ENCODE measurements at regions of chr16 and their contacts with region 1.

Region 1: GRCh38 chr16:82867485-82867884 is 240.7 kb downstream of the CDH13 start:
- DNase-seq: no peak
- ATAC-seq: no peak
- H3K4me3 ChIP-seq: no peak overlapping the region
- H3K27ac ChIP-seq: no peak overlapping the region
- H3K4me1 ChIP-seq: peaks cover 0 to 13% (median 0%) of the 10 kb centered on the region in 12 donors
- H3K27me3 ChIP-seq: no peaks in the 10 kb centered on the region
- CTCF ChIP-seq: no peak
- POLR2A ChIP-seq: no peak

Region 2: DNA sequence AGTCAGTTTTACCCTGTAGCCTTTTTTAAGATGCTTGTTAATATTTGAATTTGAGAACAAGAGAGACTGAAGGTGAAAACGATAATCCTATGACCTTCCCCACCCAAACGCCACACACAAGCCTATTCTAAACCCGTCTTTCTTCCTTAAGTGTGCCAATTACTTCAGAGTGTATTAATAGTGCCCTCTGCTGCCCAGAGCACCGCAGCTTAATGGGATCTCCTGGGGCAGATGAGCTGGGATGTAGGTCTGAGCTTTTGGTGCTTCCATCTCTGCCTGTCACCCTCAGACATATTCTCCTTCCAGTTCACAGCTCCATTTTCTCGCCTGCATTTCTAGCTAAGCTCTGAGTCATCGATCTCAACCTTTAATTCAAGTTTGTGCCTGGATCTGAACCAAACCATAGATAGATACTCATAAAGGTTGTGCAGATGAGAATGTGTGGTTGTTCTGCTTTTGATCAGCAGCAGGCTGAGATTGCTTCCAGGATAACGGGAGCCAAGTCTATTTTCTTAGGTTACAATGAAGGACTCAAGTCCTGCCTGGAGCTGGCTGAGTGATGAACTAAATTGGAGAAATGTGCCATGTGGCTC is 287.1 kb before region 1 on chr16:
- intact Hi-C with region 1: no loop called
- DNase-seq: peak in 1 of 5 donors; percentile 30
- ATAC-seq: peak; percentile 66 to 72 (median 69)
- H3K4me3 ChIP-seq: no peak overlapping the region
- H3K27ac ChIP-seq: no peak overlapping the region
- H3K4me1 ChIP-seq: peaks cover 0 to 11% (median 0%) of the 10 kb centered on the region in 12 donors
- H3K27me3 ChIP-seq: no peaks in the 10 kb centered on the region
- CTCF ChIP-seq: peak; percentile 9 to 59 (median 44)
- POLR2A ChIP-seq: no peak

Region 3: GRCh38 chr16:82748026-82748425 is 119.5 kb before region 1 on chr16:
- intact Hi-C with region 1: no loop called
- DNase-seq: peak; percentile 46 to 75 (median 60)
- ATAC-seq: peak in 3 of 4 donors; percentile 68 to 77 (median 75)
- H3K4me3 ChIP-seq: peak overlapping the region in 1 of 12 donors; percentile 0
- H3K27ac ChIP-seq: peak overlapping the region in 7 of 12 donors; percentile 5 to 41 (median 16)
- H3K4me1 ChIP-seq: peaks cover 0 to 48% (median 13%) of the 10 kb centered on the region in 12 donors
- H3K27me3 ChIP-seq: no peaks in the 10 kb centered on the region
- CTCF ChIP-seq: peak in 11 of 12 donors; percentile 9 to 48 (median 26)
- POLR2A ChIP-seq: no peak

Region 4: GRCh38 chr16:82924075-82924854 is 56.8 kb after region 1 on chr16:
- intact Hi-C with region 1: loop called in 1 of 10 experiments (anchors 10 kb)
- DNase-seq: no peak
- ATAC-seq: peak in 2 of 4 donors; percentile 47 to 51
- H3K4me3 ChIP-seq: no peak overlapping the region
- H3K27ac ChIP-seq: no peak overlapping the region
- H3K4me1 ChIP-seq: peaks cover 0 to 12% (median 1%) of the 10 kb centered on the region in 12 donors
- H3K27me3 ChIP-seq: no peaks in the 10 kb centered on the region
- CTCF ChIP-seq: no peak
- POLR2A ChIP-seq: no peak

Measured in heart left ventricle (tissue), 16 donors.